ENCODE measurements at regions of chr2 and their contacts with region 1.

Region 1: GRCh38 chr2:201158111-201158929 is 24.6 kb upstream of the CASP10 start:
- DNase-seq: peak; percentile 83
- ATAC-seq: peak; percentile 95
- H3K4me3 ChIP-seq: no peak overlapping the region
- H3K27ac ChIP-seq: peak overlapping the region; percentile 4
- H3K4me1 ChIP-seq: peaks cover 7% of the 10 kb centered on the region
- H3K27me3 ChIP-seq: no peaks in the 10 kb centered on the region
- CTCF ChIP-seq: peak; percentile 80
- POLR2A ChIP-seq: no peak
- RAD21 ChIP-seq: peak; percentile 89

Region 2: DNA sequence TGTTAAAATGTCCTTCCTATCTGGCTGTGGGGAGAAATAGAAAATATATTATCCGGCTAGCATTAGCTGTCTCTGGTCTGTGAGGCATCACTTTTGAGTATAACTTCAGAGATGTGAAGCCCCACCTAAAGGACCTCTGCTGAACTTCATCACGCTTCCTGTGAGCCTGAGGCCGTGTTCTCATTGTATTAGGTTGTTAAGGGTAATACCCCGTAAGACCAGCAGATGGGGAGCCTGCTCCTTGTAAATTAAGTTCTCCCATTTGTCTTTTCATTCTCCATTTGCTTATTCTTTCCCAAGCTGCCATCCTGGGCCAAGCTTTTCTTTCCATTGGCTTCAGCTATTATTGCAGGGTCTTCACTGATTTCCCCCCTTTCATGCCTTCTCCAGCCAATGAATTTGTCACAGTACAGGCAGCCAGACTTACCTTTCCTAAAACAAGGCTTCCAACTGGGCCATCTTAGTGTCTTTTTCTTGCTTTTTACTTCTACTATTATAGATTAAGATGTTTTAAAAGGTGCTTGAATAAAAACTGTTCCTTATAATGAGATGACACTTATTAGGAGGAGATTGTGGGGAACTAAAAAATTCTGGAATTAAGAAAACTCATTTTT is 256.8 kb before region 1 on chr2:
- CTCF ChIA-PET with region 1: interaction called, 3 read pairs
- POLR2A ChIA-PET with region 1: no interaction called
- dilution Hi-C with region 1: no loop called
- in situ Hi-C with region 1: no loop called
- intact Hi-C with region 1: loop called (anchors 2 kb)
- DNase-seq: peak; percentile 90
- ATAC-seq: peak; percentile 98
- H3K4me3 ChIP-seq: no peak overlapping the region
- H3K27ac ChIP-seq: no peak overlapping the region
- H3K4me1 ChIP-seq: no peaks in the 10 kb centered on the region
- H3K27me3 ChIP-seq: no peaks in the 10 kb centered on the region
- CTCF ChIP-seq: peak; percentile 93
- POLR2A ChIP-seq: no peak
- RAD21 ChIP-seq: peak; percentile 83

Region 3: DNA sequence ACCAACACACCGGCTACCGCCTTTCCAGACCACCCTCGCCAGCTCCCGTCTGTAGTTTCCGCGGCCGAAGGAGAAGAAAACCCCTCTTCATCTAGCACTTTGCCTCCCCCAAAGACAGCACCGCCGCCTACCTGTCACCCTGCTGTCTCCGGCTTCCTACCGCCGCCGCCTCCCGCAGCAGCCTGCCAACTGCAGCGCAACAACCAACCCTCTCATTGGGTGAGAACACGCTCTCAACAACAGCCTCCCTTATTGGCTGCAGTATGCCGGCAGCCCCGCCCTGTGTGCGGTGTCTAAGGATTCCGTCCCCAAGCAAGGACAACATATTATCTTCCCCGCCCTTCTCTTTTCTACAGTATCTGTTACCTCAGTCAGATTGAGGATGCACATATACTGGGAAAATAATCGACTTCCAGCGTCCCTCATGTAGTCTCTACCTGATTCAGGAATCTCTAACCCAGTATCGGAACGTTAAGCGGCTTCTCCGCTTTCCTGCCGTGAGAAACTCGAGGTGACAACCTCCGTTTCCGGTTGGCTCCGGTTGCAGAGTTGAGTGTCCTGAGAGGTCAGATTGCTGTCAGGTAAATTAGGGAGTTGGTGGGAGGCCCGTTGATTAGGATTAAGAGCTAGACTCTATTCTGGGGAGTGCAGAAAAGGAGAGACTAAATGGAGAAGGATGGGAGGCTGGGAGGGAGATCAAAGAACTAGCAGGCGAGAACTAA is 86.7 kb before region 1 on chr2 and contains the starts of genes HYCC2 and NDUFB3:
- CTCF ChIA-PET with region 1: interaction called, 5 read pairs
- POLR2A ChIA-PET with region 1: no interaction called
- dilution Hi-C with region 1: no loop called
- in situ Hi-C with region 1: no loop called
- intact Hi-C with region 1: loop called (anchors 1 kb)
- DNase-seq: peak; percentile 93
- ATAC-seq: peak; percentile 98
- H3K4me3 ChIP-seq: peak within 1 kb of the TSS; percentile 94
- H3K27ac ChIP-seq: peak within 1 kb of the TSS; percentile 68
- H3K4me1 ChIP-seq: no peaks in the 10 kb centered on the region
- H3K27me3 ChIP-seq: no peaks in the 10 kb centered on the region
- CTCF ChIP-seq: no peak; the same call in 1 of the 2 replicates
- POLR2A ChIP-seq: 0 out of 2 replicates have a peak, but pooled peaks have one; percentile 30
- RAD21 ChIP-seq: peak; percentile 23; the same call in 1 of the 2 replicates
- total RNA-seq, gene HYCC2: 9.1 and 10.0 TPM in 2 replicates
- total RNA-seq, gene NDUFB3: 41.0 and 105 TPM in 2 replicates

Region 4: GRCh38 chr2:201118121-201118960 is 40.0 kb before region 1 on chr2:
- CTCF ChIA-PET with region 1: interaction called, 7 read pairs
- POLR2A ChIA-PET with region 1: no interaction called
- dilution Hi-C with region 1: no loop called
- in situ Hi-C with region 1: no loop called
- intact Hi-C with region 1: loop called (anchors 1 kb)
- DNase-seq: peak; percentile 78
- ATAC-seq: peak; percentile 35
- H3K4me3 ChIP-seq: peak overlapping the region; percentile 64
- H3K27ac ChIP-seq: peak overlapping the region; percentile 92
- H3K4me1 ChIP-seq: peaks cover 4% of the 10 kb centered on the region
- H3K27me3 ChIP-seq: no peaks in the 10 kb centered on the region
- CTCF ChIP-seq: peak; percentile 56
- POLR2A ChIP-seq: no peak
- RAD21 ChIP-seq: peak; percentile 42; the same call in 1 of the 2 replicates

Region 5: GRCh38 chr2:201171259-201171814 is 13.0 kb after region 1 on chr2:
- CTCF ChIA-PET with region 1: interaction called, 12 read pairs
- POLR2A ChIA-PET with region 1: no interaction called
- dilution Hi-C with region 1: no loop called
- in situ Hi-C with region 1: no loop called
- intact Hi-C with region 1: no loop called
- DNase-seq: no peak
- ATAC-seq: no peak
- H3K4me3 ChIP-seq: no peak overlapping the region
- H3K27ac ChIP-seq: no peak overlapping the region
- H3K4me1 ChIP-seq: no peaks in the 10 kb centered on the region
- H3K27me3 ChIP-seq: no peaks in the 10 kb centered on the region
- CTCF ChIP-seq: no peak
- POLR2A ChIP-seq: no peak
- RAD21 ChIP-seq: no peak

Region 6: DNA sequence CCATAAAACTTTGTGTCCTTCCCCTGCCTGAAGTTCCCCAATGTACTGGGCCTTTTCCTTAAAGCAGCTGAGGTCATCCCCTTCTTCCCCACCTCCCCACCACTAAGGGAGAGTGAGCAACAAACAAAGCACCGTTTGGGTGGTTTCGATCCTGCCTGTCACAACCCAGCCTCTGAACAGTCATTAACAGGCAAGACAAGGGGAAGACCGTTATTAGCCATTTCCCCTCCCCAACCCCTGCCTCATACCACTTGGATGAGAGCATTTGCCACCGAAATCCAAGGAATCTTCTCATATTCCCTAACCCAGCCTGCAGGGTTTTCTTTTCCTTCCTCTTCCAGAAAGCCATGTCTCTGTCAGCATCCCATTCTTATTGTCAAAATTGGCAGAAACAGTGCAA is 358.8 kb after region 1 on chr2:
- CTCF ChIA-PET with region 1: no interaction called
- POLR2A ChIA-PET with region 1: no interaction called
- dilution Hi-C with region 1: no loop called
- in situ Hi-C with region 1: no loop called
- intact Hi-C with region 1: no loop called
- DNase-seq: peak; percentile 56
- ATAC-seq: peak; percentile 52
- H3K4me3 ChIP-seq: no peak overlapping the region
- H3K27ac ChIP-seq: no peak overlapping the region
- H3K4me1 ChIP-seq: peaks cover 2% of the 10 kb centered on the region
- H3K27me3 ChIP-seq: no peaks in the 10 kb centered on the region
- CTCF ChIP-seq: no peak
- POLR2A ChIP-seq: no peak
- RAD21 ChIP-seq: no peak

Measured in IMR-90 (cell line).